ENCODE measurements at regions of chr17 and their contacts with region 1.

Region 1: GRCh38 chr17:35373534-35373983 is at the start of gene SLFN11:
- DNase-seq: no peak
- H3K4me3 ChIP-seq: peak within 1 kb of the TSS; percentile 57
- H3K27ac ChIP-seq: no peak within 1 kb of the TSS
- H3K4me1 ChIP-seq: peaks cover 15% of the 10 kb centered on the region; the same call in 1 of the 2 replicates
- H3K27me3 ChIP-seq: peaks cover 50% of the 10 kb centered on the region
- CTCF ChIP-seq: no peak
- total RNA-seq, gene SLFN11: 0.46 and 0.53 TPM in 2 replicates

Region 2: GRCh38 chr17:35291802-35292201 is 81.8 kb before region 1 on chr17:
- CTCF ChIA-PET with region 1: no interaction called
- POLR2A ChIA-PET with region 1: no interaction called
- intact Hi-C with region 1: loop called (anchors 10 kb)
- DNase-seq: no peak
- H3K4me3 ChIP-seq: no peak overlapping the region
- H3K27ac ChIP-seq: no peak overlapping the region
- H3K4me1 ChIP-seq: no peaks in the 10 kb centered on the region
- H3K27me3 ChIP-seq: 0 out of 2 replicates have a peak, but pooled peaks cover 6% of the 10 kb centered on the region
- CTCF ChIP-seq: no peak

Region 3: DNA sequence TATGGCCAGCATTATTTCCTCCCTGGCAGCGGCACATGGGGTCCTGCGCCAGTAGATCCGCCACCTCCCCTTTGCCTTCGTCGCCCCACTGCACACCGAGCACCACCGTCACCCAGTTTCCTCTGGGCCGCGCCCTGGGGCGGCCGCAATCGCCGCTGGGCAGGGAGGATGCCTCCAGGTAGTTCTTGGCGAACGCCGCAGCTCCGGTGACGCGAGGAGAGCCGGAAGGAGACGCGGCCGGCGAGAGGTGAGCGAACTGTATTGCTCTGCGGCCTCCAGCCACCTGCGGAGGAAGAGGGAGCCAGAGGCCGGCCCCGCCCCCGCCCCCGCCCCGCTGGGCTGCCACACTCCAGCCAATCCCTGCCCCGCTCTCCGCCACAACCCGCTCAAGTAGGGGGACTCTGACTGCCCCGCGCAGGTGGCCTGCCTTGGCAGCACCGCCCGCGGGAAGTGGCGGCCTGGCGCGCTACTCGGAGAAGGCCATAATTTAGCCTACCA is 86.8 kb after region 1 on chr17:
- CTCF ChIA-PET with region 1: no interaction called
- POLR2A ChIA-PET with region 1: no interaction called
- intact Hi-C with region 1: loop called (anchors 10 kb)
- DNase-seq: peak; percentile 77 to 83
- H3K4me3 ChIP-seq: peak overlapping the region; percentile 47; the same call in 1 of the 2 replicates
- H3K27ac ChIP-seq: no peak overlapping the region
- H3K4me1 ChIP-seq: no peaks in the 10 kb centered on the region
- H3K27me3 ChIP-seq: peaks cover 24% of the 10 kb centered on the region; the same call in 1 of the 2 replicates
- CTCF ChIP-seq: no peak

Measured in PC-9 (cell line).